ENCODE measurements at regions of chr17 and their contacts with region 1.

Region 1: GRCh38 chr17:29444589-29444988 is 54.4 kb downstream of the TAOK1 start:
- DNase-seq: no peak
- H3K4me3 ChIP-seq: no peak overlapping the region
- H3K27ac ChIP-seq: no peak overlapping the region
- H3K27me3 ChIP-seq: no peaks in the 10 kb centered on the region
- CTCF ChIP-seq: no peak

Region 2: GRCh38 chr17:29389982-29390850 is 54.4 kb before region 1 on chr17 and contains the start of gene TAOK1:
- CTCF ChIA-PET with region 1: no interaction called
- POLR2A ChIA-PET with region 1: interaction called, 10 read pairs
- DNase-seq: peak; percentile 96
- H3K4me3 ChIP-seq: peak within 1 kb of the TSS; percentile 97
- H3K27ac ChIP-seq: peak within 1 kb of the TSS; percentile 52
- H3K27me3 ChIP-seq: no peaks in the 10 kb centered on the region
- CTCF ChIP-seq: no peak
- polyA plus RNA-seq, gene TAOK1: 27.6 and 34.2 TPM in 2 replicates

Measured in AG04450 (cell line).